Esophagus muscularis mucosa (tissue), 4 donors: ENCODE measurements at regions of chr20 and their contacts with region 1.

Region 1: DNA sequence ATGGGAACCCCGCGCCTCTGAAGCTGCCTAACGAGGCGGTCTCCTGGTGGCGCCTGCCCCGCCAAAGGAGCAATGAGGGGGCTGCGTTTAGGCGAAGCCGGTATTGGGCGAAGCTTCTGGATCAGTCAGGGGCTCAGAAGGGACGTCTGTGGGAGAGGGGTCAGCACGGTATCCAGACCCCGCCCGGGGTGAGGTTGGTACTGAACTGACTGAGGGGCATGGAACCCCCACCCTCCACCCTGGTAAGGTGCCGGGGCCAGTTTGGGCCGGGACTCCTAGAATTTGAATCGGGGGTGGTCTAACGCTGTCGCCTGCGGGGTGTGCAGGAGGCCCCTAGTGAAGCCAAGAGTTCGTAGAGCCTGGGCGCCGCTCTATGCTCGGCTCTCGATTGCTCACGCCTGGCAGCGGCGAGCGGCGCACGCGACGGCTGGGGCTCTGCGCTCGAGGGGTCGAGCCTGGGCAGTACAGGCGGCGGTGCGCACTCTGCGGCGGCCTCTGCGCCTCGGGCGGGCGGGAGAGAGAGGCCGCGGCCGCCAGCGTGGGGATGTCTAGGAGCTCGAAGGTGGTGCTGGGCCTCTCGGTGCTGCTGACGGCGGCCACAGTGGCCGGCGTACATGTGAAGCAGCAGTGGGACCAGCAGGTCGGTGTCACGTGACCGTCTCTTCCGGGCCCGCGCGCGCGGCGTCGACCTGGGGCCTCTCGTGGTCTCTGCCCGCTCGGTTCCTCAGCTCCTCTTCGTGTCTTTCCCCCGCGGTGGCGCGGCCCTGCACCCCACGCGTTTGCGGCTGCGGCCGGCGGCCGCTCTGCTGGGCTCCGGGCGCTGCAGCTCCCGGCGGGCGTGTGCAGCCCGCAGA is at the starts of genes KAT14 and PET117:
- DNase-seq: peak; percentile 96
- H3K4me3 ChIP-seq: peak within 1 kb of the TSS; percentile 76 to 96 (median 87)
- H3K27ac ChIP-seq: peak within 1 kb of the TSS; percentile 83 to 92 (median 90)
- H3K4me1 ChIP-seq: peaks cover 21 to 43% (median 41%) of the 10 kb centered on the region in 4 donors
- H3K27me3 ChIP-seq: no peaks in the 10 kb centered on the region
- CTCF ChIP-seq: no peak
- EP300 ChIP-seq: no peak
- POLR2A ChIP-seq: peak; percentile 23
- total RNA-seq, gene KAT14: 14.1 to 18.2 (median 16.3) TPM
- total RNA-seq, gene PET117: 13.4 to 28.4 (median 16.9) TPM

Region 2: DNA sequence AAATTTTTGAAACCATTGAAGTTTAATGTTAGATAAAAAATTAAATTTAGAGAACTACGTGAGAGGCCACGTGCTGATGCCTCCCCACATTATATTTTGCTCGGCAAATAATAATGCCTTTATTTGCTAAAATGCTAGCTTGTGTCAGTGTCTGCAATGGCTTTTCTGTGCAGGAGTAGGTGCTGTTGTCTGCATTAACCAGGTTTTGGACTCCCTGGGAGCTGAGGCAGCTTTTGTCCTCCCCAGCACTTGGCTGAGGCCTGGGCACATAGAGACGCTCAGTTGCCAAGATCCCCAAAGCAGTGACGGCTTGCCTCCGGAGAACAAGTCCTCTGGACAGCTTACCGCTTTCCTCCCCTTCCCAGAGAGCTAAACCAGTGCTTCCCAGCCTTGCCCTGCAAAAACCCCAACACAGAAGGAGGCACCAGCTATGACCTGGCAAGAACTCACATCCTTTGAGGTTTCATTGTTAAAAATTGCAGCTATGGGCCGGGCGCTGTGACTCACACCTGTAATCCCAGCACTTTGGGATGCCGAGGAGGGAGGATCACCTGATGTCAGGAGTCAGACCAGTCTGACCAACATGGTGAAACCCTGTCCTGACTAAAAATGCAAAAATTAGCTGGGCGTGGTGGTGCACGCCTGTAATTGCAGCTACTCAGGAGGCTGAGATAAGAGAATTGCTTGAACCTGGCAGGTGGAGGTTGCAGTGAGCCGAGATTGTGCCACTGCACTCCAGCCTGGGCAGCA is 59.9 kb after region 1 on chr20:
- intact Hi-C with region 1: no loop called
- DNase-seq: no peak
- H3K4me3 ChIP-seq: no peak overlapping the region
- H3K27ac ChIP-seq: no peak overlapping the region
- H3K4me1 ChIP-seq: no peaks in the 10 kb centered on the region
- H3K27me3 ChIP-seq: no peaks in the 10 kb centered on the region
- CTCF ChIP-seq: no peak
- EP300 ChIP-seq: no peak
- POLR2A ChIP-seq: no peak

Region 3: DNA sequence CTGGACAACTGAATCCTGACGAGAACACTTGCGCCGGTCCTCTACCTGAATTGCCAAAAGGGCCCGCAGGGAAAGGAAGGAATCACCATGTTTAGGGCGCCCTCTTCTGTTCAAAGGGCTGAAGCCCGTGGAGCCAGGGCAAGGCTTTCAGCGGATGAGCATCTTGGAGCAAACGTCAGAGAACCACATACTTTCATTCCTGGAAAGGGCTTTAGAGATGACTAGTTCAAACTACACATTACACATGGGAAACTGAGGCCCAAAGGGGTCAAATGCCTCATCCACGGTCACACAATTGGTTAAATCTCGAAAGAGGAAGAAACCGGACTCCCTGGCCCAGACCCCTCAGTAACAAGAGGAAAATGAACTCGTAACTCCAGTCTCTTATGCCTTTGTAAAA is 139.2 kb after region 1 on chr20:
- intact Hi-C with region 1: loop called (anchors 5 kb)
- DNase-seq: no peak
- H3K4me3 ChIP-seq: no peak overlapping the region
- H3K27ac ChIP-seq: no peak overlapping the region
- H3K4me1 ChIP-seq: peaks cover 0 to 3% (median 0%) of the 10 kb centered on the region in 4 donors
- H3K27me3 ChIP-seq: peaks cover 0 to 39% (median 8%) of the 10 kb centered on the region in 4 donors
- CTCF ChIP-seq: peak; percentile 55 to 69 (median 57)
- EP300 ChIP-seq: no peak
- POLR2A ChIP-seq: no peak

Region 4: GRCh38 chr20:18287915-18288748 is 150.5 kb after region 1 on chr20 and contains the start of gene ZNF133:
- intact Hi-C with region 1: loop called (anchors 5 kb)
- DNase-seq: peak; percentile 99
- H3K4me3 ChIP-seq: peak within 1 kb of the TSS; percentile 74 to 89 (median 80)
- H3K27ac ChIP-seq: peak within 1 kb of the TSS; percentile 87 to 96 (median 93)
- H3K4me1 ChIP-seq: peaks cover 16 to 30% (median 19%) of the 10 kb centered on the region in 4 donors
- H3K27me3 ChIP-seq: peaks cover 0 to 13% (median 0%) of the 10 kb centered on the region in 4 donors
- CTCF ChIP-seq: peak in 1 of 3 experiments; percentile 16
- EP300 ChIP-seq: no peak
- POLR2A ChIP-seq: no peak
- total RNA-seq, gene ZNF133: 10.9 to 18.9 (median 14.6) TPM